Breast epithelium (tissue), 4 donors: ENCODE measurements at regions of chr1 and their contacts with region 1.

Region 1: GRCh38 chr1:32508751-32509140 is 30.5 kb upstream of the ZBTB8A start:
- DNase-seq: no peak
- H3K4me3 ChIP-seq: no peak overlapping the region
- H3K27ac ChIP-seq: no peak overlapping the region
- H3K4me1 ChIP-seq: no peaks in the 10 kb centered on the region
- H3K27me3 ChIP-seq: no peaks in the 10 kb centered on the region
- CTCF ChIP-seq: no peak
- POLR2A ChIP-seq: no peak

Region 2: GRCh38 chr1:32724678-32725614 is 216.2 kb after region 1 on chr1:
- intact Hi-C with region 1: no loop called
- DNase-seq: no peak
- H3K4me3 ChIP-seq: no peak overlapping the region
- H3K27ac ChIP-seq: no peak overlapping the region
- H3K4me1 ChIP-seq: no peaks in the 10 kb centered on the region
- H3K27me3 ChIP-seq: no peaks in the 10 kb centered on the region
- CTCF ChIP-seq: no peak
- POLR2A ChIP-seq: no peak

Region 3: DNA sequence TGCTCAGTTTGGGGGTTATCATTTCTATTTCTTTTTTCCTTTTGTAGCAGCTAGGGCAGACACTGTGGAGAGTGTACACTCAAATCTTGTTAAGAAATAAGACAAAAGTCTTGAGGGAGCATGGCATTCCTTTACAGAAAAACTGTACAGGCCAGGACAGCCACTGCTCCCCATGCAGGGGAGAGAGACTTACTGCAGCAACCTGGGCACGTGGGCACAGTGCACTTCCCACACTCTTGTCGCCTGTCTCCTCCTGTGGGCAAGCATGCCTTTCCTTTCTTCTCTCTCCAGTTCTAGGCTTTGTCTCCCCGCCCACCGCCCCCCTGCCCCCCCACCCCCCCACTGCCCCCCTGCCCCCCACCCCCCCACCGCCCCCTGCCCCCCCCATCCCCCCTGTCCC is 870.2 kb after region 1 on chr1:
- intact Hi-C with region 1: loop called (anchors 5 kb)
- DNase-seq: no peak
- H3K4me3 ChIP-seq: no peak overlapping the region
- H3K27ac ChIP-seq: no peak overlapping the region
- H3K4me1 ChIP-seq: peaks cover 0 to 1% of the 10 kb centered on the region in 2 donors
- H3K27me3 ChIP-seq: no peaks in the 10 kb centered on the region
- CTCF ChIP-seq: no peak
- POLR2A ChIP-seq: no peak